Caco-2 (cell line): ENCODE measurements at regions of chr12 and their contacts with region 1.

Region 1: DNA sequence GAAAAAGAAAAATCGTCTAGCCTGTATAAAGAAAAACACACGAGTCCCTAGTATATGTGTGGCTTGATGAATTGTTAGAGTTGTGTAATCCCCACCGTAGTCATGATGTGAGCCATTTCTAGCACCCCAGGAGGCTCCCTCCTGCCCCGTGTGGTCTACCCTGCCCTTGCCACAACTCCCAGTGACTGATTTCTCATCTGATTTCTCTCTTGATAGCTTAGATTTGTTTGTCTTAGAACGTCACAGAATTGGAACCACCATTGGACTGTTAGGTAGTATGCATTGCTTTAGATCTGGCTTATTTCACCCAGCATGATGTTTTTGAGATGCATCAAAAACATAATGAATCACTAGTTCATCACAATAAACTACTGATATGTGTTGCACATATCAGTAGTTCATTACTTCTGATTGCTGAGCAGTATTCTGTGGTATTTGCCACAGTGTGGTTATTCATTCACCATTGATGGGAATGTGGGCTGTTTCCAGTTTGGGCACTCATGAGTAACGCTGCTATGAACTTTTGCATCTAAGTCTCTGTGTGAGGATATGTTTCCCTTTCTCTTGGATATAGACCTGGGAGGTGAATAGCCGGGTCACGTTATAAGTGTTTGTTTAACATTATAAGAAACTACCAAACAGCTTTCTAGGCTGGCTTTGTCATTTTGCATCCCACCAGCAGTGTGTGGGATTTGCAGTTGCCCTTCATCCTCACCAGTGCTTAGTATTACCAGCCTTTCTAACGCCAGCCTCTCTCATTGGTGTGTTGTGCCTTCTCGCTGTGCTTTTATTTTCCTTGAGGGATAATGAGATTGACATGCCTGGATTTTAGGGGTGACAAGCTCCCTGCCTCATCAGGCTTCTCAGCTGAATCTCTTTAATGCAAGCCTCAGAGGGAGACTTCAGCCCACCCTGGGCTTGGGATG is 31.9 kb upstream of the NCOR2 start:
- DNase-seq: no peak
- H3K4me3 ChIP-seq: no peak overlapping the region
- H3K4me3 Mint-ChIP-seq: no peak overlapping the region
- H3K27ac Mint-ChIP-seq: no peak overlapping the region
- H3K4me1 ChIP-seq: peaks cover 30% of the 10 kb centered on the region
- H3K4me1 Mint-ChIP-seq: peaks cover 19% of the 10 kb centered on the region
- H3K27me3 ChIP-seq: no peaks in the 10 kb centered on the region
- H3K27me3 Mint-ChIP-seq: no peaks in the 10 kb centered on the region
- CTCF ChIP-seq: no peak

Region 2: GRCh38 chr12:124633273-124633966 is 34.1 kb after region 1 on chr12:
- CTCF ChIA-PET with region 1: no interaction called
- POLR2A ChIA-PET with region 1: no interaction called
- intact Hi-C with region 1: loop called (anchors 5 kb)
- DNase-seq: peak; percentile 69 to 91
- H3K4me3 ChIP-seq: no peak overlapping the region
- H3K4me3 Mint-ChIP-seq: peak overlapping the region; percentile 39
- H3K27ac Mint-ChIP-seq: peak overlapping the region; percentile 92
- H3K4me1 ChIP-seq: peaks cover 72% of the 10 kb centered on the region
- H3K4me1 Mint-ChIP-seq: peaks cover 38% of the 10 kb centered on the region
- H3K27me3 ChIP-seq: no peaks in the 10 kb centered on the region
- H3K27me3 Mint-ChIP-seq: no peaks in the 10 kb centered on the region
- CTCF ChIP-seq: peak in 1 of 2 experiments; percentile 27

Region 3: GRCh38 chr12:124655698-124656516 is 56.6 kb after region 1 on chr12:
- CTCF ChIA-PET with region 1: no interaction called
- POLR2A ChIA-PET with region 1: no interaction called
- intact Hi-C with region 1: no loop called
- DNase-seq: no peak
- H3K4me3 ChIP-seq: no peak overlapping the region
- H3K4me3 Mint-ChIP-seq: no peak overlapping the region
- H3K27ac Mint-ChIP-seq: no peak overlapping the region
- H3K4me1 ChIP-seq: no peaks in the 10 kb centered on the region
- H3K4me1 Mint-ChIP-seq: no peaks in the 10 kb centered on the region
- H3K27me3 ChIP-seq: no peaks in the 10 kb centered on the region
- H3K27me3 Mint-ChIP-seq: no peaks in the 10 kb centered on the region
- CTCF ChIP-seq: no peak